IMR-90 (cell line): ENCODE measurements at regions of chr4 and their contacts with region 1.

Region 1: GRCh38 chr4:139514381-139515059 is 41.5 kb downstream of the SETD7 start:
- DNase-seq: no peak
- ATAC-seq: no peak
- H3K4me3 ChIP-seq: no peak overlapping the region
- H3K27ac ChIP-seq: no peak overlapping the region
- H3K4me1 ChIP-seq: no peaks in the 10 kb centered on the region
- H3K27me3 ChIP-seq: no peaks in the 10 kb centered on the region
- CTCF ChIP-seq: no peak
- POLR2A ChIP-seq: no peak
- RAD21 ChIP-seq: no peak

Region 2: GRCh38 chr4:139472852-139473251 is 41.7 kb before region 1 on chr4:
- CTCF ChIA-PET with region 1: no interaction called
- POLR2A ChIA-PET with region 1: no interaction called
- dilution Hi-C with region 1: no loop called
- in situ Hi-C with region 1: no loop called
- intact Hi-C with region 1: loop called (anchors 1 kb)
- DNase-seq: no peak
- ATAC-seq: no peak
- H3K4me3 ChIP-seq: no peak overlapping the region
- H3K27ac ChIP-seq: no peak overlapping the region
- H3K4me1 ChIP-seq: no peaks in the 10 kb centered on the region; the same call in 1 of the 2 replicates
- H3K27me3 ChIP-seq: no peaks in the 10 kb centered on the region
- CTCF ChIP-seq: no peak
- POLR2A ChIP-seq: no peak
- RAD21 ChIP-seq: no peak

Region 3: GRCh38 chr4:139484783-139485318 is 29.7 kb before region 1 on chr4:
- CTCF ChIA-PET with region 1: no interaction called
- POLR2A ChIA-PET with region 1: no interaction called
- dilution Hi-C with region 1: no loop called
- in situ Hi-C with region 1: no loop called
- intact Hi-C with region 1: no loop called
- DNase-seq: no peak
- ATAC-seq: no peak
- H3K4me3 ChIP-seq: no peak overlapping the region
- H3K27ac ChIP-seq: no peak overlapping the region
- H3K4me1 ChIP-seq: no peaks in the 10 kb centered on the region
- H3K27me3 ChIP-seq: no peaks in the 10 kb centered on the region
- CTCF ChIP-seq: no peak
- POLR2A ChIP-seq: no peak
- RAD21 ChIP-seq: no peak

Region 4: GRCh38 chr4:139633661-139634060 is 119.1 kb after region 1 on chr4:
- CTCF ChIA-PET with region 1: no interaction called
- POLR2A ChIA-PET with region 1: no interaction called
- dilution Hi-C with region 1: no loop called
- in situ Hi-C with region 1: no loop called
- intact Hi-C with region 1: no loop called
- DNase-seq: peak; percentile 20
- ATAC-seq: peak; percentile 79
- H3K4me3 ChIP-seq: no peak overlapping the region
- H3K27ac ChIP-seq: no peak overlapping the region
- H3K4me1 ChIP-seq: no peaks in the 10 kb centered on the region
- H3K27me3 ChIP-seq: peaks cover 34% of the 10 kb centered on the region
- CTCF ChIP-seq: peak; percentile 60
- POLR2A ChIP-seq: no peak
- RAD21 ChIP-seq: peak; percentile 72